Activated CD4-positive, alpha-beta memory T cell treated with anti-CD3 and anti-CD28 coated beads for 36 hours (primary cell): ENCODE measurements at regions of chr6 and their contacts with region 1.

Region 1: DNA sequence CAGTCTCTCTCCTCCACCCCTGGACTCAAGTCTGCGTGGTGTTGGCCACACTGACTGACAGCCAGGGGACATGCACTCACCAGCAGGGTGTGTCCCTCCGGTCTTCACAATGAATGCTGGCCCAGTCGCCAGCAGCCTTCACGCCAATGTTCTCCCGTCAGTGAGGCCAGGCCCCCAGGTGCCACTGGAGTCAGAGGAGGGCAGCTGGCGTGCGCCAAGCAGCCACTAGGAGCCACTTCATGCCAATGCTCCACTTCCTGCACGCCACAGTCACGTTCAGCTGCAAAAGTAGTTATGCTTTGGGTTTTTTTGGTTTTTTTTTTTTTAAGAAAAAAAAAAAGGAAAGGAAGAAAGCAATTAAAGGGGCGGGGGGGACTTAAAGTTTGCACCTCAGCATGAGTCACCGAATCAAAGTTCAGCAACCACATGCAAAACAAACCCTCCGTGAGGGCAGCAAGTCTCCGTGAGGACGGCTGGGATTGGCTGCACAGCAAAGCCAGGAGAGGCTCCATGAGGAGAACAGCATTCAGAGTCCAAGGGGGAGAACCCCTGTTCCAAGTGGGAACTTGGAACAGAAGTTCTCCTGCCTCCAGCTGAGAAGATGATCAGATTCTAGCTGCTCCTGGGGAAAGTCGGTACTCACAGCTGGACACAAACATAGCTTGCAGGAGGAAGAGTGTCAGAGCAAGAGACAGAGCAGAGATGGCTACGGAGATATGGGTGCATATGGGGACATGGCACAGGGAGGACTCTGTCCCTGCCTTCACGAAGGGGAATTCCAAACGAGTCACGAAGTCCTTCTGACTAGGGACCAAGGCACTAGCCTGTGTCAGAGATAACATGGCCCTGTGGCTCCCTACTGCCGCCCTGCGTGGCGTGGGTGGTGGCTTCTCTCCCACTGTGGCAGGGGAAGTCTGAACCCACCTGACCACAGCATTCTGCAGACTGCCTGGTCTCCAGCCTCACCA is at the start of gene ZC3H12D:
- DNase-seq: peak; percentile 92
- H3K4me3 Mint-ChIP-seq: peak within 1 kb of the TSS; percentile 98
- H3K27ac Mint-ChIP-seq: peak within 1 kb of the TSS; percentile 98
- H3K4me1 Mint-ChIP-seq: peaks cover 44% of the 10 kb centered on the region
- H3K27me3 Mint-ChIP-seq: no peaks in the 10 kb centered on the region
- total RNA-seq, gene ZC3H12D: 124 to 129 TPM

Region 2: DNA sequence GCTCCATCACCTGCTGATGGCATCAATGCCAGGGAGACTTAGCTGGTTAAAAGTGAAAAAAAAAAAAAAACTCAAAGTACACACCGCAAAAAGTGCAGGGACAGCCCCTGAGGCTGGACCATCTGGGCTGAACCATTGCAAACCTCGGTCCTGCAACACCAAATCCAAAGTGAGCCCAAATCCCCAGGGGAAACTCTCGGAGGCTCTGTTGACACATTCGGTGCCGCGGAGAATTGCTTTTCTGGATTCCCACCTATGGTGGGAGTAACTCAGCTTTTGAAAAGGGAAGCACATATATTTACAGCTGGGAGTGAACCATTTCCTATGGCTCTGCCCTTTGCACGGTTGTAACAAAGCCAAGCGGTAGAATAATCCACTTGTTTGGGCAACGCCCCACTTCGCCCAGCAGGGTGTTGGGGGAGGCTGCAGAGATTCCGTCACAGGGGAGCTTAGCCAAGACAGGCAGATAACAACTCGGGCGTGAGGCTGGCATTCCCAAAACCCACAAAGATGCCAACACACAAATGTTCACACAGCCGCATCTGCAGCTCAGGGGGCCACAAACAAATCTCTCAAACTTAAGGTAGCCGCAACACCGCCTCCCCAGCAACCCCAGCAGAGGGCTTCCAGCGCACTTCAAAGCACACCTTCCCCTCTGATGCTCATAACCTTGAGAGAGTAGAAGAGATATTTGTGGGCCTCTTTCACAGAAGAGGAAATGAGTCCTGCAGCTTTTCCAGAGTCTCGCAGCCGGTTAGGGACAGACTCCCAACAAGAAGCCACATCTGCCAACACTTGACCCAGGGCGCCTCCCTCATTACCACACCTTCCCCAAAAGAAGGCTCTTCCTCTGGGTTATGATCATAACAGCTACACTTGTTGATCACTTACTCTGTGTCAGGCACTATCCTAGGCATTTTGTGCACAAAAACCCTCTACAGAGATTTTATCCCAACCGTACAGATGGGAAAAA is 11.7 kb before region 1 on chr6:
- CTCF ChIA-PET with region 1: no interaction called
- POLR2A ChIA-PET with region 1: interaction called, 11 read pairs
- intact Hi-C with region 1: no loop called
- DNase-seq: no peak
- H3K4me3 Mint-ChIP-seq: peak overlapping the region; percentile 21
- H3K27ac Mint-ChIP-seq: peak overlapping the region; percentile 47
- H3K4me1 Mint-ChIP-seq: peaks cover 80% of the 10 kb centered on the region
- H3K27me3 Mint-ChIP-seq: no peaks in the 10 kb centered on the region

Region 3: DNA sequence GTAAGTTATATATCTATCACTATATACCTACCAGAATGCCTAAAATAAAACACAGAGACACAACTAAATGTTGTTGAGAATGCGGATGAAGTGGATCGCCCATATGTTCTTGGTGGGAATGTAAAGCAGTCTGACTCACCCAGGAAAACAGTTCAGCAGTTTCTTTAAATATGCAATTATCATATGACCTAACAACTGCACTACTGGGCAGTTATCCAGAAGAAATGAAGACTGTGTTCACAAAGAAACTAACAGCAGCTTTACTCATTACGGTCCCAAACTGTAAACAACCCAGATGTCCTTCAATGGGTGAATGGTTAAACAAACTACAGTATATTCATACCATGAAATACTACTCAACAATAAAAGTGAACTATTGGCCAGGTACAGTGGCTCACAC is 14.0 kb after region 1 on chr6:
- CTCF ChIA-PET with region 1: interaction called, 53 read pairs
- POLR2A ChIA-PET with region 1: interaction called, 7 read pairs
- intact Hi-C with region 1: loop called (anchors 1 kb)
- DNase-seq: no peak
- H3K4me3 Mint-ChIP-seq: no peak overlapping the region
- H3K27ac Mint-ChIP-seq: peak overlapping the region; percentile 97
- H3K4me1 Mint-ChIP-seq: peaks cover 82% of the 10 kb centered on the region
- H3K27me3 Mint-ChIP-seq: no peaks in the 10 kb centered on the region

Region 4: DNA sequence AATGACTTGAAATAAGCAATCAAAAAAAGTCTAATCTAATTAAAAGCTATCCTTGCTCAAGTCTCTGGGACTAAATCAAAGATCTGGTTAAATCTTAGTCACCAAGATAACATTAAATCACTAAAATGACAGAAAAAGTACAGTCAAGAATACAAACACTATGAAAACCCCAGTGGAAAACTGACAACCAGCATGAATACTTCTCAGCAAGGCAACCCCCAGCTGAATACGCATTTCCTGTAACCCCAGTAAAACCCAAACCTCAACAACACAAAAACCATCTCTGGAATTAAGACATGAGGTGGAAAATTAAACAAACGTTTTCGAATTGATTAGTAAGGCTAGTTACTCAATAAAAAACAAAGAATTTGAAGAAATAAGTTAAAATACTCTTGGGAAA is 23.5 kb after region 1 on chr6:
- CTCF ChIA-PET with region 1: interaction called, 17 read pairs
- POLR2A ChIA-PET with region 1: interaction called, 9 read pairs
- intact Hi-C with region 1: loop called (anchors 1 kb)
- DNase-seq: peak; percentile 68
- H3K4me3 Mint-ChIP-seq: peak overlapping the region; percentile 50
- H3K27ac Mint-ChIP-seq: peak overlapping the region; percentile 95
- H3K4me1 Mint-ChIP-seq: peaks cover 70% of the 10 kb centered on the region
- H3K27me3 Mint-ChIP-seq: no peaks in the 10 kb centered on the region

Region 5: DNA sequence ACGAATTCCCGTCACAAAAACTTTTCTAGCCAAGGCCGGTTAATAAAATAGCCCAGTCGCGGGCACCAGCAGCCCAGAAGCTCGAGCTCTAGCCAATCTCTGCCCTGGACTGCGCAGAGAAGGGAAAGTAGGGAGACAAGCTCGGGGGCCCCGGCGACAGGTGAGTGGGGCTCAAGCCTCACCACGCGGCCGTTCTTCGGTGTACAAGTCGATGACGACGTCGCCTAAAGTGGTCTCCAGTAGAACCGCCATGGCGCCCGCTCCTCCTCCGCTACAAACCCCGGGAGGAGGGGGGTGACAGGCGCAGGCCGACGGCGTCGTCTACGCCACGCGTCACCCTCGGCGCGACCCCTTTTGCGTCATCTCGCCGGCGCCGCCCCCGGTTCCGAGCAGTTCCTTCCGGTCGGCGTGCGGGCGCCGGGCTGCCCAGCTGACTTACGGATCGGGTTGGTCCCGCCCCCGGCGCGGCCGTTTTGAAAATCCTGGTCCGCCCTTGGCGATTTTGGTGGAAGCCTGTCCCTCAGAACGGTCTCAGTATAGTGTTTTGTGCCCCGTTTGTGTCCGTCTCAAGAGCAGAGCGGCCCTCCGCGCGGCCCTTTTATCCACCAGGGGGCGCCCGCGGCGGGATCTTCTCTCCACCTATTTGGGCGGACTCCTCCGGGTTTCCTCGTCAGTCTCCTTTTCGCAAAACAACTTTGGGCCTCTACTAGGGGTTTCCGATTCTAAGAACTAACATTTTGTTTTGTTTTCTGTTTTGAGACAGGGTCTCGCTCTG is 60.9 kb after region 1 on chr6 and contains the start of gene PPIL4:
- CTCF ChIA-PET with region 1: interaction called, 5 read pairs
- POLR2A ChIA-PET with region 1: interaction called, 3 read pairs
- intact Hi-C with region 1: loop called (anchors 1 kb)
- DNase-seq: peak; percentile 97
- H3K4me3 Mint-ChIP-seq: peak within 1 kb of the TSS; percentile 97
- H3K27ac Mint-ChIP-seq: peak within 1 kb of the TSS; percentile 97
- H3K4me1 Mint-ChIP-seq: peaks cover 38% of the 10 kb centered on the region
- H3K27me3 Mint-ChIP-seq: peaks cover 4% of the 10 kb centered on the region
- total RNA-seq, gene PPIL4: 21.5 to 23.6 TPM

Region 6: GRCh38 chr6:149746147-149746946 is 261.3 kb after region 1 on chr6 and contains the start of gene NUP43:
- CTCF ChIA-PET with region 1: no interaction called
- POLR2A ChIA-PET with region 1: no interaction called
- intact Hi-C with region 1: loop called (anchors 5 kb)
- DNase-seq: peak; percentile 97
- H3K4me3 Mint-ChIP-seq: peak within 1 kb of the TSS; percentile 98
- H3K27ac Mint-ChIP-seq: peak within 1 kb of the TSS; percentile 85
- H3K4me1 Mint-ChIP-seq: peaks cover 28% of the 10 kb centered on the region
- H3K27me3 Mint-ChIP-seq: no peaks in the 10 kb centered on the region
- total RNA-seq, gene NUP43: 64.3 to 69.8 TPM

Region 7: DNA sequence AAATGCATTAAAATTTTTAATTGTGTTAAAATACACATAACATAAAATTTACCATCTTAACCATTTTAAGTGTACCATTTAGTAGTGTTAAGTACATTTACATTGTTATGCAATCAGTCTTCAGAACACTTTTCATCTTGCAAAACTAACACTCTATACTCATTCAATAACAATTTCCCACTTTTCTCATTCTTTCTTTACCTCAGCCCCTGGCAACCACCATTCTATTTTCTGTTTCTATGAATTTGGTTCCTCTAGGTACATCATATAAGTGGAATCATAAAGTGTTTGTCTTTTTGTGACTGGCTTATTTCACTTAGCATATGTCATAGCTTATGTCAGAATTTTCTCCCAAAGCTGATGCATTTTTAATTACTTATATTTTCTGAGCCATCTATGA is 296.7 kb after region 1 on chr6:
- CTCF ChIA-PET with region 1: no interaction called
- POLR2A ChIA-PET with region 1: no interaction called
- intact Hi-C with region 1: no loop called
- DNase-seq: no peak
- H3K4me3 Mint-ChIP-seq: no peak overlapping the region
- H3K27ac Mint-ChIP-seq: no peak overlapping the region
- H3K4me1 Mint-ChIP-seq: no peaks in the 10 kb centered on the region
- H3K27me3 Mint-ChIP-seq: no peaks in the 10 kb centered on the region